ENCODE measurements at regions of chr6 and their contacts with region 1.

Region 1: GRCh38 chr6:136226027-136226673 is 24.0 kb downstream of the MTFR2 start:
- DNase-seq: peak; percentile 52 to 79 (median 74)
- H3K4me3 ChIP-seq: peak overlapping the region in 4 of 7 experiments; percentile 39 to 70 (median 40)
- H3K27ac ChIP-seq: peak overlapping the region in 1 of 2 experiments; percentile 56
- H3K4me1 ChIP-seq: peaks cover 2 to 16% (median 6%) of the 10 kb centered on the region in 4 experiments
- H3K27me3 ChIP-seq: no peaks in the 10 kb centered on the region

Region 2: DNA sequence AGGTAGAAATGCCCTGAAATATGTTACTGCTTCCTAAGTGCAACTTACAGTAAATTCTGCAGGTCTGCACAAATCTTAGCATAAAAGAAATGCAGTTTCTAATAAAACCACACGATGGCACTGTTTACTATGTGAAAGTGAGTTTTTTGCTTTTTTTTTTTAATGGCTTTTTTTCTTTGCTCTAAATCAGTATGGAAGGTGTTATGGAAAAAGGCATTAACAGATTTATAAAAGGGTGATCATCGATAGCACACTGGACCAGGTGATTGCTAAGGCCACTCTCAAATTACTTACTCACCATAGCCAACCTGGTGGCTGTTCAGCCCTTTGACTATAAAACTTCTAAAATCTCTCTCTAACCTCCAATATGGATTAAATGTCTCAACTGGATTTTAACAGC is 774.5 kb before region 1 on chr6:
- CTCF ChIA-PET with region 1: interaction called, 13 read pairs
- POLR2A ChIA-PET with region 1: no interaction called
- DNase-seq: peak; percentile 54 to 75 (median 67)
- H3K4me3 ChIP-seq: no peak overlapping the region
- H3K27ac ChIP-seq: no peak overlapping the region
- H3K4me1 ChIP-seq: no peaks in the 10 kb centered on the region
- H3K27me3 ChIP-seq: no peaks in the 10 kb centered on the region

Region 3: DNA sequence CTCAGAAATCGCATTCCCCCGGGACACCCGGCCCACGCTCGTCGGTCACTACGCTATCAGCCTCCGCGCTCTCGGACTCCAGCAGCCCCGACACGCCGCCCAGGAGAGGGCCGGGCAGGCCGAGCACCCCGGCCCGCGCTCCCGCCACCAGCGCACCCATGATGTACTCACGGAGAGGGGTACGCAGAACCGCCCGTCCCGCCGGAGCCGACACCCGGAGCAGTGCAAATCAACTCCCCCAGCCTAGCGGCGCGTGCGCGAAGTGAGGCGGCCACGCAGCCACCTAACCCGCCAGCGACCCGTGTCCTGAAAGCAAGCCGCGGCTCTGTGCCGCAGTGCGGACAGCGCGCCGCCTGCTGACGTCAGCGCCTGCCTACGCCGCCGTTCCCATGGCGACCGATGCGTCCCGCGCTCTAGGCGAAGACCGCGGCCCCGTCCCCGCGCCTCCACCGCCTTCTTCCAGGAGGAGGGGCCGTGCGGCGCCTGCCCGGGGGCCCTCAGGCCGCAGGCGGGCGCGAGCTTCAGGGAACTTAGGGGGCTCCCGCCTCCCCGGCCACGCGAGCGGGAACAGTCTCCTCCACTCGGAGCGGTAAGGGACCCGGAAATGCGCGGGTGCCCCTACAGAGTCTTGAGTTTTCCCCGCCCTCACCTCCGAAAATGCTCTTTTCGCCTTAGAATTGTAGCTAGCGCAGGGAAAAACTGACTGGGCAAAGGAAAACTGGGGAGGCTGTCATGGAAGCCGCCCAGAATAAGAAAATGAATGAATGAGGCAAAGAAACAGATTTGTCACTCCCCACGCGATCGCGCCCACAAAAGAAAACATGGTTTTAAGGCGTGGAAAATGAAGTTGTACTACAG is 728.5 kb before region 1 on chr6 and contains the start of gene AHI1:
- CTCF ChIA-PET with region 1: interaction called, 16 read pairs
- POLR2A ChIA-PET with region 1: no interaction called
- DNase-seq: peak; percentile 93 to 97 (median 97)
- H3K4me3 ChIP-seq: peak within 1 kb of the TSS; percentile 71 to 99 (median 94)
- H3K27ac ChIP-seq: peak within 1 kb of the TSS; percentile 94 to 98
- H3K4me1 ChIP-seq: peaks cover 8 to 18% (median 14%) of the 10 kb centered on the region in 4 experiments
- H3K27me3 ChIP-seq: no peaks in the 10 kb centered on the region

Region 4: GRCh38 chr6:135506270-135506997 is 719.7 kb before region 1 on chr6:
- CTCF ChIA-PET with region 1: interaction called, 10 read pairs
- POLR2A ChIA-PET with region 1: no interaction called
- DNase-seq: peak; percentile 62 to 77 (median 76)
- H3K4me3 ChIP-seq: no peak overlapping the region
- H3K27ac ChIP-seq: no peak overlapping the region
- H3K4me1 ChIP-seq: no peaks in the 10 kb centered on the region
- H3K27me3 ChIP-seq: no peaks in the 10 kb centered on the region

Region 5: DNA sequence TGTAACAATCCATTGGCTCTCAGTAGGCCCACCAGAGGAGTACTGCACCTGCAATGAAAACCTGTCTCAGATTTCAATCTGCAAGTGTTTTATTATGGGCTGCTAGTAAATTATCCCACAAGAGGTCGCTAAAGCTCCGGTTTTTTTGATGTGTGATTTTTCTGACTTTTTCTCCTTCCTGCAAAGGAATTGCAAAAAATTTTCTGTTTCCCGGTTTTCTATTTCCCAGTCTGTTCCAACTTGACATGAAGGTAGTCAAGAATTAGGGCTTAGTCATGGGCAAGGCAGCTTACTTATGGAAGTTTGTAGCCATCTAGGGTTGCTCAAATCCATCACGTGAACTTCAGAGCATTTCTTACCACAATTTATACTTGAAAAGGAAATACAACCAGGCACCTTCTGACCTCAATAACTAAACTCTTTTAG is 690.1 kb before region 1 on chr6:
- CTCF ChIA-PET with region 1: interaction called, 19 read pairs
- POLR2A ChIA-PET with region 1: no interaction called
- DNase-seq: peak; percentile 51 to 78 (median 69)
- H3K4me3 ChIP-seq: peak overlapping the region in 4 of 7 experiments; percentile 5 to 32 (median 21)
- H3K27ac ChIP-seq: no peak overlapping the region
- H3K4me1 ChIP-seq: peaks cover 0 to 6% (median 4%) of the 10 kb centered on the region in 4 experiments
- H3K27me3 ChIP-seq: no peaks in the 10 kb centered on the region

Region 6: DNA sequence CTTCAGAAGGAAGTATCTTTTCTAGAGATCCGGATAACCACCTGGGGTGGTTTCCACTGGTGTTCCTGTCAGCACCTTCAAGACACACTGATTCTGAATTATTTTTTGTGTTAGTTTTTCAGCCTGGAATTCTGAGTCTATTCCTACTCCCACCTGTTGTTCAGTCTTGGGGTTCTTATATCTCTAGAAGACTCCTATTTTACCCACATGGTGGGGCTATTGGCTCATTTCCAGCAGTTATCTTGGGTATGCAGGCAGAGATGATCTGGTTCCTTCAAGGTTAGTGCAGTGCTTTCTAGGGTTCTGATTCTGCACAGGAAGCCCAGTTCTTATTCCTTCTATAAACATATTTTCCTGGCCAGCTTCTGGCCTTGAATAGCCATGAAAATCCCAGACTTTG is 550.3 kb before region 1 on chr6:
- CTCF ChIA-PET with region 1: interaction called, 25 read pairs
- POLR2A ChIA-PET with region 1: no interaction called
- DNase-seq: peak; percentile 74 to 80 (median 75)
- H3K4me3 ChIP-seq: no peak overlapping the region
- H3K27ac ChIP-seq: no peak overlapping the region
- H3K4me1 ChIP-seq: peaks cover 0 to 4% (median 2%) of the 10 kb centered on the region in 4 experiments
- H3K27me3 ChIP-seq: no peaks in the 10 kb centered on the region

Measured in common myeloid progenitor, CD34-positive (primary cell).